Right ventricle myocardium inferior (tissue), 1 donor: ENCODE measurements at regions of chr3 and their contacts with region 1.

Region 1: DNA sequence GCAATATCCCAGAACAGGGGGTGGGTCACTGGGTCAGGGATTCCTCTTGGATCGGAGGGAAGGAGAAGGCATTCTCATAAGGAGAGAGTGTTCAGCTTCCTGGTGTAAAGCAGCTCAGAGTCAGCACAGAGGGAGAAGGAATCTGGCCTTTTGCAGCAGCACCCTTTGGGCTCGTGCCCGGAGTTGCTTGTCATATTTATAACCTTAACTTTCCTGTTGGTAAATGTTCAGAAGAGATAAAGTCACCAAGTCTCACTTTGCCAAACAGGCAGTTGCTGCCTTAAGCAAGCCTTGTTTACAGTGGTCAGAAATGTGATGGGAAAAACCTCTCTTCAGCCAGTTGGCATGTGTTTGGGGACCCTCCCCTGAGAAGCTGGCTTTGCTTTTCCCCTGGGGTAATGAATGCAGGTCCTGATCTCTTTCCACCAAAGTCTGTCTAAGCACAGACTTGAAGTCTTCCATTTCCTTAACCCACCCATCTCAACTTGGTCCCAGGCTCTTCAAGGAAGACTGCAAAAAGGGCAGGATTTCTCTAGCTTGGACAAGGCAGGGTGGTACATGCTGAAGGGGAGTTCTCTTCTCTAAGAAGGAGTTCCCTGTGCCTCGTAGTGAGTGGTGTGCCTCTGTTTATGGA is 206.9 kb upstream of the BHLHE40 start:
- DNase-seq: peak; percentile 89
- ATAC-seq: peak; percentile 82

Region 2: DNA sequence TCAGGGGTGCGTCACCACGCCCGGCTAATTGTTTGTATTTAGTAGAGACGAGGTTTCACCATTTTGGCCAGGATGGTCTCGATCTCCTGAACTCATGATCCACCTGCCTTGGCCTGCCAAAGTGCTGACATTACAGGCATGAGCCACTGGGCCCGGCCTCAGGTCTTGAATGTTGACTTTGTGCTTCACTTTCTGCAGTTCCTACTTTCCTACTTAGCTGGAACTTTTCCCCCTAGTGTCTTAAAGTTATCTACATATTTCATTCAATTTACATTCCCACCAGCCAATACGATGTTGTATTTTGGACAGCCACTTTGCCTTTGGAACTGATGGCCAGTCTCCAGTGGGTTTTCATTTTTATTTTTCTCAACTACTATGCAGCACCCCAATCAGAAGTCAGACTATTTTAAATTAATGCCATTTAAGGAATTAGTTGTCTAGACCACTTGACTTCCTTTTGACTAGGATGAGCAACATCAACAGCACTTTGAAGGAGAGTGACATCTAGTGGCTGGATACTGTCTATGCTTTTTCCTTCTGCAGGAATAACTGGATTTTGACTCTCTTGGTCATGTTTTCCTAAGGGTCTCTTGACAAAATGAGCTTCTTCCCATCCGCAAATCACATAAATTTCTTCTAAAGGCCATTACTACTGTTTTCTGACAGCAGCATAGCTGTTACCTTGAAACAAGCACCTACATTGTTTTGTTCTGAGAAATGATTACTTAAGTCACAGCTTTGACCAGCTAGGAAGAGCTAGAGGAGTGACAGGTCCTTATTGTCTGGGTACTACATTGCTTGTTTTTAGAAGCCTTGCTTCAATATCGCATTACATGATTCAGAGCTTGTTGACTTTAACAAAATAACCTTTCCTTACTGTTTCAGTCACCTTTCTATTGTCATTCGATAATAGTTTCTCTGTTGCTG is 138.9 kb before region 1 on chr3:
- intact Hi-C with region 1: no loop called
- DNase-seq: no peak
- ATAC-seq: peak; percentile 61

Region 3: DNA sequence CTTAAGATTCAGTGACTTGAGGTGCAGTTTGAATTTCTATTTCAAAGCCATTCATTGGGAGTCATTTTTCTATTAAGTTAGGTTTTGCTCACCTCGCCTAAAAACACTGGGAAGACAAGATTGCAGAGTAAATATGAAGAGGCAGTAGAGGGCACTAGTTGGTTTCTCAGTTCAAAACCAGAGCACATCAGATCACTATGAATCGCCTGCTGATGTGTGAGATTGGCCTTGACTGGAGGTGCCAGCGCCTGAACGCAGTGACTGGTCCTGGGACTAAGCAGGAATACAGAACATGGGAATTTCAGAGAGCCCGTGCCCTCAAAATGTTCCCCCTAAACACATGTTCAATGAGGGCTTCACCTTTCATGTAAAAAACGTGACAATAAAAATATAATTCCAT is 50.2 kb before region 1 on chr3:
- intact Hi-C with region 1: loop called (anchors 5 kb)
- DNase-seq: peak; percentile 60
- ATAC-seq: peak; percentile 72

Region 4: DNA sequence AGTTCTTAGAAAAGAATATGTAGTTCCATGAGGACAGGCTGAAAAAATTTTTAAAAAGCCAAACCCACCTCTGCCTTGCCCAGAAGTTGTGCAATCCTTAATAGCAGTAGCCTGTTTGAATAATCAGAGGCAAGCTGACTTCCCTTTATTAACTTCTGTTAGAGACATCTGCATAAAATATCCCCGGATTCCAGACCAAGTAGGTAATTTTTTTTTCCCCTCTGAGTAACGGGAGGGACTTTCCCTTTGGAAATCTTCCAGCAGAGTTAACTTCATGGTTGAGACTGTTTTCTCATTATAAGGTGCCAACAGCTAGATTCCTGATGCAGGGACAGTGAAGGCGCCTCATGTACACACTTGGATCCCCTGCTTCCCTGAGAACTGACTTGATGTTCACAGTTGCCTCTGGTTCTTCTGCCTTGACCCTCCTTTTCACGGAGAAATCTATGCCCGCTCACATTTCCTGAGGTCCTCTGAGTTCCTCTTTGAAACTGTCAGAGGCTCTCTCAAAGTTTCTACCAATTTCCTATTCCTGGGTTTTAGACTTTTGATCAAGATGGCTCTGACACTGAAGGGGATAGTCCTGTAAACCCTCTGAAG is 20.7 kb before region 1 on chr3:
- intact Hi-C with region 1: loop called (anchors 2 kb)
- DNase-seq: no peak
- ATAC-seq: peak; percentile 66

Region 5: DNA sequence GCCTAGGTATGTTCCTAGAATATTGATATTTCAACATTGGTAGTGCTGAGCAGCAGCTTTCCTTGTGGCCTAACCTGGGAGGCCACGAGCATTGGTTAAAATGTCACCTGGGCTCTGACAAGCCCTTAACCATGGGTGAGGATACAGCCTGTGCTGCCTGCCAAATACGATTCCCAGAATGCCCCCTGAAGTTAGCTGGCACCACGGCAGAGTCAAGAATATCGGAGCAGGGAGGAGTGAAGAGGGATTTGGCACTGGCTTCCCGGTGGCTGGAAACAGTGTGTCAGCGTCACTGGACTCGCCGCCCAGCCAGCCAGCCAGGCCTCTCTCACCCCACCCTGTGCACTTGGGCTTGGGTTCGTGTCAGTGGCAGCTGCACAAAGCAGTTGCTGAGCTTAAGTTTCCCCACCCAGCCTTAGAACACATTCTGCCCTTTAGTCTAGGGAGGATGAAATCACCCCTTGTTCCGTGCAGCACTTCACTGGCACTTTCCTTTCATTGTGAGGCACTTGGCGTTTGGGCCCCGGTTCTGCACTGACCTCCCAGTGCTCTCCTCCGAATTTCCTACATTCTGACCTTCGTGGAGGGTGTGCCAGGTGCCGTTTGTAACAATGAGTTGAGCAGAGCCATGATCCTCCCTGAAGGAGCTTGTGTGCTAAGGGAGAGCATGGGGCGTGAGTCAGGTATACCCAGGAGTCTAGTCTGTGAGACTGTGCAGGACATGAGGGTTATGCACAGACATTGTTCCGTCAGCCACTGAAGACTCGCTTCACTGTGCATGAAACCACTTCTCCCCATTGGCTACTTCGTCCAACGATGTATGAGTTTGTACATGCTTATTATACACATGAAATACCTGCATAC is 54.2 kb after region 1 on chr3:
- intact Hi-C with region 1: loop called (anchors 5 kb)
- DNase-seq: peak; percentile 84
- ATAC-seq: peak; percentile 89